Mucosa of descending colon (tissue), 3 donors: ENCODE measurements at regions of chr15 and their contacts with region 1.

Region 1: GRCh38 chr15:42395838-42396237 is 36.5 kb downstream of the CAPN3 start:
- DNase-seq: peak in 1 of 3 donors; percentile 55
- ATAC-seq: peak; percentile 82
- H3K4me3 ChIP-seq: no peak overlapping the region
- H3K4me1 ChIP-seq: peaks cover 30% of the 10 kb centered on the region
- CTCF ChIP-seq: no peak

Region 2: GRCh38 chr15:42084460-42085235 is 311.2 kb before region 1 on chr15:
- intact Hi-C with region 1: loop called in 1 of 2 experiments (anchors 5 kb)
- DNase-seq: peak; percentile 81 to 88 (median 81)
- ATAC-seq: peak; percentile 92
- H3K4me3 ChIP-seq: no peak overlapping the region
- H3K4me1 ChIP-seq: peaks cover 8% of the 10 kb centered on the region
- CTCF ChIP-seq: peak; percentile 81

Region 3: DNA sequence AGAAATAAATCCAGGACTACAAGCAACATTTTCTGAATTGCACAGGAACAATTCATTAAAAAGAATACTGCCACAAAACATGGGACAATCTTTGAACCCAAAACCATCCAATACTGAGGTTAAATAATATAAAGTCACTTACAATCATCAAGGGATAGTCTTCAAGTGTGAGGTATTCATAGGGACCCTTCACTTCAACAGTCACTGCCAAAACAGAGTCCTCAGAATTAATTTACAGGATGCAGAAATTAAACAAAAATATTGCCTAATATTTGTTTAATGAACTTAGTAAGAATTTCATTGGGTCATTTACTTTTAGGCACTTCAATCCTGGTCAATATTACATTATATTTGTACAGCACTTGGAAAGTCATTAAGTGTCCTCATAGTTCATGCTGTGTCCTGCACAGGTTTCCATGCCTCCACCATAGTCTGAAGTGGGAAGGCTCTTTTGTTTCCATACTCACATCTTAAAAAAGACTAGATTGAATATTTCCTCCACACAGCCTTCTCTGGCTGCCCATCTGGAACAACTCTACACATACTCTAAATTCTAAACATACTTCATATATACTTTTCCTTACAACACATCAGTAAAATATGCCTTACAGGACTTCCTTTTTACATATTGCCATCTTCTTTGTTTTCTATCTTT is 156.2 kb before region 1 on chr15:
- intact Hi-C with region 1: no loop called
- DNase-seq: no peak
- ATAC-seq: no peak
- H3K4me3 ChIP-seq: no peak overlapping the region
- H3K4me1 ChIP-seq: no peaks in the 10 kb centered on the region
- CTCF ChIP-seq: no peak